ENCODE measurements at regions of chr3 and their contacts with region 1.

Region 1: GRCh38 chr3:57169872-57170623 is 4.9 kb upstream of the IL17RD start:
- DNase-seq: peak; percentile 55 to 74 (median 56)
- ATAC-seq: peak; percentile 87
- H3K4me3 ChIP-seq: peak overlapping the region; percentile 35
- H3K27ac ChIP-seq: no peak overlapping the region
- H3K4me1 ChIP-seq: peaks cover 0 to 10% of the 10 kb centered on the region in 2 experiments; a peak in 2 of 5 replicates
- H3K27me3 ChIP-seq: peaks cover 0 to 17% of the 10 kb centered on the region in 2 experiments; a peak in 3 of 5 replicates
- CTCF ChIP-seq: peak; percentile 64 to 80 (median 74)
- EP300 ChIP-seq: no peak
- POLR2A ChIP-seq: no peak
- RAD21 ChIP-seq: peak; percentile 71 to 77

Region 2: DNA sequence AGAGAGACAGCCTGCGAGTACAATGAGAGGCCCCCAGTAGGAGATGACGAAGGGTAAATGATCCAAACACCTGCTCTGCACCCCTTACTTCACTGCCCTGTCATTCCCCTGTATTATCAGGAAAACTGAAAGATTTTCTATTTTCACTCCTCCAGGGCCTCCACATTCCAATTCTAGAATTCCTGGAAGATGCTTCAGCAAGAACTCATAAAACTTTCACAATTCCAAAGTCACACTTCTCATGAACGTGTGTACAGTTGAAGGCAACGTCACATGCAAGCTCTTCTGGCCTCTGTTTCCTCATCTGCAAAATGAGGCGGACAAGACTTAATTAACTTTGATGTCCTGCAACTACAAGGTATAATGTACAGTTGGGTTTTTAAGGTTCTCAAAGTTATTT is 172.4 kb before region 1 on chr3:
- CTCF ChIA-PET with region 1: interaction called, 3 read pairs
- POLR2A ChIA-PET with region 1: no interaction called
- in situ Hi-C with region 1: no loop called
- intact Hi-C with region 1: loop called (anchors 10 kb)
- DNase-seq: no peak
- ATAC-seq: no peak
- H3K4me3 ChIP-seq: no peak overlapping the region
- H3K27ac ChIP-seq: no peak overlapping the region
- H3K4me1 ChIP-seq: no peaks in the 10 kb centered on the region
- H3K27me3 ChIP-seq: no peaks in the 10 kb centered on the region; a peak in 1 of 5 replicates
- CTCF ChIP-seq: no peak
- EP300 ChIP-seq: no peak
- POLR2A ChIP-seq: no peak
- RAD21 ChIP-seq: no peak

Region 3: DNA sequence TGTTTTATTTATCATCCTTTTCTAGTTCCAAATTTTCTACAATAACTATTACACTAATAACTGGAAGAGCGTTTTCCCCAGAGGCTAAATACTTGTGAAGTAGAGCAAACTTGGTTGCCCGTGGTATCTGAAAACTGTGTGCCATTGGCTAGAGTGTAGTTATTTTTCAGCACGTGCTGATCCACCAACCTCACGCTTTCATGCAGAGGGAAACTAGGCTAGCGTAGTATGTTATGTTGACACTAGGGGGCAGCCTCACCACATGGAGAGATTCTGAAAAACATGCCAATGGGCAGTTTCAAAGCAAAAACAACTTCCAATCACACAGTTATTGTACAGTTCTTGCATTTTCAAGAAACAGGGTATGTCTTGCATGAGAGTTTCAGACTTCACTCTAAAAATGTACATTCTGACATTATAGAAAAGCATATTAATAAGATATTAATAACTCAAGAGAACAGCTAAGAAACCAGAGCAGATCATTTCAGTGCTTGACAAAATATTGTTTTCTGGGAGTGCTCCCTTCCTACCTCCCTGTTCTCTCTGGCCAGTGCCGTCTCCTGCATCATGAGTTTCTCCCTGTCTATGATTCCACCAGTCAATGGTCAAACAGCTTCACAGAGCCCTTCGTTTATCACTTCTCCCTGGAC is 69.9 kb before region 1 on chr3:
- CTCF ChIA-PET with region 1: no interaction called
- POLR2A ChIA-PET with region 1: no interaction called
- in situ Hi-C with region 1: no loop called
- intact Hi-C with region 1: loop called (anchors 5 kb)
- DNase-seq: peak; percentile 54 to 73 (median 58)
- ATAC-seq: peak; percentile 87
- H3K4me3 ChIP-seq: no peak overlapping the region
- H3K27ac ChIP-seq: no peak overlapping the region
- H3K4me1 ChIP-seq: no peaks in the 10 kb centered on the region; a peak in 1 of 5 replicates
- H3K27me3 ChIP-seq: peaks cover 0 to 14% of the 10 kb centered on the region in 2 experiments; a peak in 2 of 5 replicates
- CTCF ChIP-seq: peak; percentile 64 to 74 (median 68)
- EP300 ChIP-seq: no peak
- POLR2A ChIP-seq: no peak
- RAD21 ChIP-seq: peak; percentile 71 to 81

Region 4: GRCh38 chr3:57227204-57227929 is 57.3 kb after region 1 on chr3 and contains the start of gene APPL1:
- CTCF ChIA-PET with region 1: interaction called, 3 read pairs
- POLR2A ChIA-PET with region 1: no interaction called
- in situ Hi-C with region 1: no loop called
- intact Hi-C with region 1: loop called (anchors 2 kb)
- DNase-seq: peak; percentile 92 to 97 (median 93)
- ATAC-seq: peak; percentile 98
- H3K4me3 ChIP-seq: peak within 1 kb of the TSS; percentile 61
- H3K27ac ChIP-seq: peak within 1 kb of the TSS; percentile 63
- H3K4me1 ChIP-seq: peaks cover 16 to 23% of the 10 kb centered on the region in 2 experiments; a peak in 4 of 5 replicates
- H3K27me3 ChIP-seq: no peaks in the 10 kb centered on the region
- CTCF ChIP-seq: 0 out of 6 replicates have a peak, but pooled peaks of 1 of the 3 experiments have one; percentile 0
- EP300 ChIP-seq: no peak
- POLR2A ChIP-seq: peak; percentile 80
- RAD21 ChIP-seq: no peak
- polyA plus RNA-seq, gene APPL1: 2.8 to 3.5 TPM

Region 5: DNA sequence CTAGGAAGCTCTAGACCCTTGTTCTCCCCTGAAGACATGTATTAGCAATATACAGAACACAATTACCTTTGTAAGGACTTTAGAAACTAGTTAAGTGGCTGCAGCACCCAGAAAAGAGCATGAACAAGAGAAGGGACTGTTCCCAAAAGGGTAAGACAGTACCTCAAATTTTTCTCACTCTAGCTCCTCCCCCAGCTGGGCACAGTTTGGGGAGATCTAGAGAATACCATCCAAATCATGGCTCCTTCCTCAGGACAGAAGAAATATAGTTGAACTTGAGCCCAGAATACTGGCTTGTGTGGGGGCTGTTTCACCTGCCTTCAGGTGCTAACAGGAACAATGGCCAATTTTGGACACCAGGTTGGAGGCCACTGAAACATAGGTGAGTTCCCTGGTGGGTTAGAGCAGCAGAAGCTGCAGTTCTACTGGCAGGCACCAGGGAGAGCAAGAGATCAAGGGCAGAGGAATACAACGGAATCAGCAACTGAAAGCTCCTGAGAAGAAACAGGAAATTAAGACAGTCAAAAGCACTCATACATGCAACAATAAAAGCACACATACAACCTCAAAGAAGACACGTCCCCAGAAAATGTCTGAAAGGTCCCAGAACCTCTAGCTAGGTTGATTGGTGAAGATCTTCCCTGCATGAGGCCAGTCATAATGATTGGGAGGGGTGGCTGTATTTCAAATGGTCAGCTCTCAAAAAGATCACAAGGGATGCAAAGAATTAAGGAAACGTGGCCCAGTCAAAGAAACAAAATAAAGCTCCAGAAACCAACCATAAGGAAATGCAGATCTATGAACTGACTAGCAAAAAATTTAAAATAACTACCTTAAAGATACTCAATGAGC is 227.4 kb after region 1 on chr3:
- CTCF ChIA-PET with region 1: interaction called, 3 read pairs
- POLR2A ChIA-PET with region 1: no interaction called
- in situ Hi-C with region 1: no loop called
- intact Hi-C with region 1: loop called (anchors 10 kb)
- DNase-seq: peak; percentile 19 to 58 (median 33)
- ATAC-seq: peak; percentile 93
- H3K4me3 ChIP-seq: no peak overlapping the region
- H3K27ac ChIP-seq: no peak overlapping the region
- H3K4me1 ChIP-seq: no peaks in the 10 kb centered on the region; a peak in 1 of 5 replicates
- H3K27me3 ChIP-seq: no peaks in the 10 kb centered on the region; a peak in 1 of 5 replicates
- CTCF ChIP-seq: peak; percentile 76 to 82 (median 76)
- EP300 ChIP-seq: no peak
- POLR2A ChIP-seq: no peak
- RAD21 ChIP-seq: peak; percentile 64 to 81

Region 6: GRCh38 chr3:57484563-57484962 is 314.5 kb after region 1 on chr3:
- CTCF ChIA-PET with region 1: no interaction called
- POLR2A ChIA-PET with region 1: no interaction called
- in situ Hi-C with region 1: no loop called
- intact Hi-C with region 1: no loop called
- DNase-seq: no peak
- ATAC-seq: no peak
- H3K4me3 ChIP-seq: no peak overlapping the region
- H3K27ac ChIP-seq: no peak overlapping the region
- H3K4me1 ChIP-seq: no peaks in the 10 kb centered on the region
- H3K27me3 ChIP-seq: no peaks in the 10 kb centered on the region
- CTCF ChIP-seq: no peak
- EP300 ChIP-seq: no peak
- POLR2A ChIP-seq: no peak
- RAD21 ChIP-seq: no peak

Region 7: GRCh38 chr3:57961828-57962447 is 791.9 kb after region 1 on chr3:
- CTCF ChIA-PET with region 1: no interaction called
- POLR2A ChIA-PET with region 1: no interaction called
- in situ Hi-C with region 1: no loop called
- intact Hi-C with region 1: no loop called
- DNase-seq: peak; percentile 14 to 55 (median 25)
- ATAC-seq: peak; percentile 65
- H3K4me3 ChIP-seq: no peak overlapping the region
- H3K27ac ChIP-seq: no peak overlapping the region
- H3K4me1 ChIP-seq: peaks cover 16 to 22% of the 10 kb centered on the region in 2 experiments
- H3K27me3 ChIP-seq: no peaks in the 10 kb centered on the region
- CTCF ChIP-seq: peak; percentile 28 to 63 (median 59); a peak in 5 of 6 replicates
- EP300 ChIP-seq: no peak
- POLR2A ChIP-seq: no peak
- RAD21 ChIP-seq: peak; percentile 62 to 76

Region 8: DNA sequence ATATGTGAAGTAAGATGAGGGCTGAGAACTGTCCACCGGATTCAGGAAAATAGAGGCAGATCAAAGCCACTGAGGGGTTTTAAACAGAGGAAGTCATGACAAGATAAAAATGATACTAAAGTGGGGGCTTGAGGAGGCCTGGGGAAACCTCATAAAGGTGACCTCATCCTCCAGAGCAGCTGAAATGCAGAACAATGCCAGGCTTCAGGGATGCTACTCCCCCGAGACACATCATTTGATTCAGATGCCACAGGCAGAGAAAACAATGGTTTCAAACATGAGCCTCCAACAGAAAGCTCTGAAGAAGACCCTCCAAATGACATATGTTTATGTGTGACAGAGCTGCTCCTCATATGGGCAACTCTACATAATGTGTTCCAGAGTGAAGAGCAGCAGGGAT is 1873.3 kb after region 1 on chr3:
- CTCF ChIA-PET with region 1: no interaction called
- POLR2A ChIA-PET with region 1: no interaction called
- in situ Hi-C with region 1: no loop called
- intact Hi-C with region 1: no loop called
- DNase-seq: no peak
- ATAC-seq: no peak
- H3K4me3 ChIP-seq: no peak overlapping the region
- H3K27ac ChIP-seq: no peak overlapping the region
- H3K4me1 ChIP-seq: no peaks in the 10 kb centered on the region; a peak in 1 of 5 replicates
- H3K27me3 ChIP-seq: no peaks in the 10 kb centered on the region
- CTCF ChIP-seq: no peak
- EP300 ChIP-seq: no peak
- POLR2A ChIP-seq: no peak
- RAD21 ChIP-seq: no peak

Measured in K562 (cell line).